ENCODE measurements at regions of chr1 and their contacts with region 1.

Region 1: GRCh38 chr1:44721485-44722361 is 9.2 kb downstream of the RNU5D-1 start:
- DNase-seq: peak; percentile 91
- H3K4me3 Mint-ChIP-seq: peak overlapping the region; percentile 66
- H3K27ac Mint-ChIP-seq: peak overlapping the region; percentile 96
- H3K4me1 Mint-ChIP-seq: peaks cover 77% of the 10 kb centered on the region
- H3K27me3 Mint-ChIP-seq: peaks cover 4% of the 10 kb centered on the region

Region 2: DNA sequence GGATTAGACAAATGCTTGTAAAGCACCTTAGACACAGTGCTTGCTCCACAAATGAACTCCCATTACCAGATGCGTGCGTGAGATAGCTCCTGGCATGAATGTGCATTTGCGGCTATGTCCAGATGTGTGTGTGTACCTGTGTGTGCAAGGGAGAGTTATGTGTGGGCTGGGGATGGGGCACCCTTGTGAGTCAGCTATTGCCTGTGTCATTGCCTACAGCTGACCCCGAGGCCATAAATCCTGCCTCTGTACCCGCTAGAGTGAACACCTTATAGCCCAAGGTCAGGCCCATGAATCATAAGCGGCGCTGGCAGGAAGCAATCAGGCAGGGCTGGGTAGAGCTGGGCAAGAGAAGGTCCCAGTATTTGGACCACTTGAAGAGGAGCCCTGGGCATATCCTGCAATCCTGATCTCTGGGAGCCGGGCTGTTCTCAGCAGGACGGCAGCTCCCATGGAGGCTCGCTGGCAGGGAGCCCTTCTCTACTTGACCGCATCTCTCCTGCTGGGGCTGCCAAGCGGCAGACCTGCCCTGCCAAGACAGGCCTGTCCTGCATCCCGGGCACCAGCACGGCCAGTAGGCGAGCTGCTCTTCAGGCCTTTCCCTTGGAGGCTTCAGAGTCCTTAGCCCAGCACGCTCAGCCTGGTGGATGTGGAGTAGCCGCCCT is 133.8 kb before region 1 on chr1:
- CTCF ChIA-PET with region 1: no interaction called
- POLR2A ChIA-PET with region 1: no interaction called
- intact Hi-C with region 1: no loop called
- DNase-seq: no peak
- H3K4me3 Mint-ChIP-seq: no peak overlapping the region
- H3K27ac Mint-ChIP-seq: no peak overlapping the region
- H3K4me1 Mint-ChIP-seq: no peaks in the 10 kb centered on the region
- H3K27me3 Mint-ChIP-seq: peaks cover 6% of the 10 kb centered on the region

Region 3: DNA sequence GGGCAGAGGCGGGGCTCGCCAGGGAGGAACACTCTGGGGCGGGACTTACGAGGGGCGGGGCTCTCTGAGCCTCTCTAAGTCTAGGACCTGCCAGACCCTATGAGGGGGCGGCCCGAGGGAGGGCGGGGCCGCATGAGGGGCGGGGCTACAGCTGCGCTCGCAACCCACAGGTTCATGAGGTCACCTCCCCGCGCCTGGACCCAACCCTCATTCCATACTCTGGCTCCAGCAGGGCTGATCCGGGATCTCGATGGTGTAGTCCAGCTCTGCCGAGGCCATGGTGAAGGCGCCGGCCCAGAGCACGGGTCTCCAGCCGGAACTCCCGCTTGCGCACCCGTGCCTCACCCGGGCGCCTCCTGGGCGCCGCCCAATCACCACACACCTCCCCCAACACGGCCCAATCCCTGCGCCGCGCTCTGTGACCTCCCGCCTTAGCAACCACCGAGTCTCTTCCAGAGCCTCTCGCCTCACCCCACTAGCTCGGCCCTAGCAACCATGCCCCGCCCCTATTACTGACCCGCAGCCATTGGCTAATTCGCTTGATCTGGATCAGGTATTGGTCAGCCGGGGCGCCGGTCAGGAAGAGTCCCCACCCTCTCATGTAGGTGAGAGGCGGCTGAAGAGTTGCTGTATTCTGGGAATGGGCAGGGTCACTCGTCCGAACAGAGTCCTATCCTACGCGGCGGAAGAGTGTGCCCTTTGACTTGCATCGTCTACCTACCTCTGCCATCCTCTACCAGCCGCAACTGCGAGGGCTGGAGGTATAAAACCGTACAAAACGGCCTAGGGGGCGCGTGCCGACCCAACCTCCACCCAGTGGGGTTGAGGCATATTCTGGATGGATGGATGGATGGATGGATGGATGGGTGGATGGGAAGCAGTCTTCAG is 47.4 kb before region 1 on chr1 and contains the starts of genes ARMH1 and TMEM53:
- CTCF ChIA-PET with region 1: interaction called, 5 read pairs
- POLR2A ChIA-PET with region 1: interaction called, 25 read pairs
- intact Hi-C with region 1: loop called (anchors 5 kb)
- DNase-seq: peak; percentile 99
- H3K4me3 Mint-ChIP-seq: peak within 1 kb of the TSS; percentile 83
- H3K27ac Mint-ChIP-seq: peak within 1 kb of the TSS; percentile 88
- H3K4me1 Mint-ChIP-seq: peaks cover 23% of the 10 kb centered on the region
- H3K27me3 Mint-ChIP-seq: no peaks in the 10 kb centered on the region
- total RNA-seq, gene ARMH1: 134 to 141 TPM
- total RNA-seq, gene TMEM53: 5.1 to 6.5 TPM

Region 4: GRCh38 chr1:44775078-44775929 is 53.6 kb after region 1 on chr1 and contains the start of gene RPS8:
- CTCF ChIA-PET with region 1: interaction called, 3 read pairs
- POLR2A ChIA-PET with region 1: interaction called, 49 read pairs
- intact Hi-C with region 1: no loop called
- DNase-seq: peak; percentile 94
- H3K4me3 Mint-ChIP-seq: peak within 1 kb of the TSS; percentile 83
- H3K27ac Mint-ChIP-seq: peak within 1 kb of the TSS; percentile 81
- H3K4me1 Mint-ChIP-seq: peaks cover 38% of the 10 kb centered on the region
- H3K27me3 Mint-ChIP-seq: no peaks in the 10 kb centered on the region
- total RNA-seq, gene RPS8: 2,983 to 3,047 TPM

Region 5: GRCh38 chr1:44807262-44808062 is 85.7 kb after region 1 on chr1 and contains the start of gene DYNLT4:
- CTCF ChIA-PET with region 1: interaction called, 12 read pairs
- POLR2A ChIA-PET with region 1: interaction called, 94 read pairs
- intact Hi-C with region 1: loop called (anchors 1 kb)
- DNase-seq: peak; percentile 95
- H3K4me3 Mint-ChIP-seq: peak within 1 kb of the TSS; percentile 73
- H3K27ac Mint-ChIP-seq: peak within 1 kb of the TSS; percentile 98
- H3K4me1 Mint-ChIP-seq: peaks cover 90% of the 10 kb centered on the region
- H3K27me3 Mint-ChIP-seq: no peaks in the 10 kb centered on the region
- total RNA-seq, gene DYNLT4: 0.40 to 0.41 TPM

Region 6: GRCh38 chr1:44985747-44986359 is 264.1 kb after region 1 on chr1:
- CTCF ChIA-PET with region 1: no interaction called
- POLR2A ChIA-PET with region 1: interaction called, 12 read pairs
- intact Hi-C with region 1: no loop called
- DNase-seq: no peak
- H3K4me3 Mint-ChIP-seq: peak overlapping the region; percentile 99
- H3K27ac Mint-ChIP-seq: peak overlapping the region; percentile 85
- H3K4me1 Mint-ChIP-seq: peaks cover 29% of the 10 kb centered on the region
- H3K27me3 Mint-ChIP-seq: no peaks in the 10 kb centered on the region